SK-N-SH (cell line): ENCODE measurements at regions of chr7 and their contacts with region 1.

Region 1: GRCh38 chr7:18570890-18571478 is 75.4 kb downstream of the HDAC9 start:
- DNase-seq: peak; percentile 65
- H3K4me3 ChIP-seq: no peak overlapping the region
- H3K27ac ChIP-seq: peak overlapping the region in 1 of 2 experiments; percentile 53; a peak in 1 of 4 replicates
- H3K4me1 ChIP-seq: peaks cover 10 to 13% of the 10 kb centered on the region in 2 experiments; a peak in 3 of 4 replicates
- H3K27me3 ChIP-seq: no peaks in the 10 kb centered on the region
- CTCF ChIP-seq: peak; percentile 93
- EP300 ChIP-seq: no peak
- RAD21 ChIP-seq: peak; percentile 95

Region 2: GRCh38 chr7:18361756-18362155 is 209.2 kb before region 1 on chr7:
- CTCF ChIA-PET with region 1: interaction called, 69 read pairs
- POLR2A ChIA-PET with region 1: no interaction called
- DNase-seq: no peak
- H3K4me3 ChIP-seq: no peak overlapping the region
- H3K27ac ChIP-seq: no peak overlapping the region
- H3K4me1 ChIP-seq: no peaks in the 10 kb centered on the region; a peak in 2 of 4 replicates
- H3K27me3 ChIP-seq: no peaks in the 10 kb centered on the region
- CTCF ChIP-seq: no peak
- EP300 ChIP-seq: no peak
- RAD21 ChIP-seq: no peak

Region 3: DNA sequence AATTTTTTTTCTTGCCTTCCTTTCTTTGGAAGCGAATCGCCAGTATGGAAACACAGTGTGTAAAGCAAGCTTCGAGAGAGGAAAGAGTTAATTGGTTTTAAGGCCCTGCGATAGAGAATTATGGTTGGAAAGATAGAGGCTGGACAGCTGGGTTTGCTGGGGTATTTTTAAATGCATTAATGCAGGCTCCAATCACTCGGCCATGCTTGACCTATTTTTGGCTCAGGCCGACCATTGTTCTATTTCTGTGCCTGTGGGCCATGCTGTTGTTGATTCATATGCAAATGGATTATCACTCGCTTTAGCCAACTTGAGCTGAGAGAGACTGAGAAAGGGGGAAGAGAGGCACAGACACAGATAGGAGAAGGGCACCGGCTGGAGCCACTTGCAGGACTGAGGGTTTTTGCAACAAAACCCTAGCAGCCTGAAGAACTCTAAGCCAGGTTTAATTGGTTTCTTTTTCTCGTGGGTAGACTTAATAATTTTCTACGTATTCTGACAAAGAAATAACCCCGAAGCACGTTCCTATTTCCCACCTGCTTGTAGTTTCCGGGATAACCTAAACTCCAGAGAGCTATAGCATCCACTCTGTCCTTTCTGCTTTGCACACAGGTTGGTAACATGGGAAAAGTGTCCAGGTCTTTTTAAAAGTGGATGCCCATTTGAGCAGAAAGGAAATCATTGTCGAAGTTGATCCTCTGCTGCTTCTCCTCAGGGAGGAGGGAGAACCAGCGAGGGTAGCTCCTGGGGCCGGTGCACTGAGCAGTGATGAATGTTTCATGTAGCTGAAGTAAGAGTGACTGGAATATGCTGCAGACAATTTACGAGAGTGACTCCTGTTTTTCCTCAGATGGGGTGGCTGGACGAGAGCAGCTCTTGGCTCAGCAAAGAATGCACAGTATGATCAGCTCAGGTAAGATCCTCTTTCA is 75.3 kb before region 1 on chr7 and contains the start of gene HDAC9:
- CTCF ChIA-PET with region 1: interaction called, 38 read pairs
- POLR2A ChIA-PET with region 1: interaction called, 8 read pairs
- DNase-seq: peak; percentile 49
- H3K4me3 ChIP-seq: peak within 1 kb of the TSS; percentile 63 to 67
- H3K27ac ChIP-seq: peak within 1 kb of the TSS; percentile 80 to 100
- H3K4me1 ChIP-seq: peaks cover 8 to 53% of the 10 kb centered on the region in 2 experiments; a peak in 3 of 4 replicates
- H3K27me3 ChIP-seq: no peaks in the 10 kb centered on the region
- CTCF ChIP-seq: no peak
- EP300 ChIP-seq: peak; percentile 62 to 93; a peak in 2 of 4 replicates
- RAD21 ChIP-seq: peak; percentile 43
- polyA plus RNA-seq, gene HDAC9: 11.6 and 19.8 TPM in 2 replicates

Region 4: DNA sequence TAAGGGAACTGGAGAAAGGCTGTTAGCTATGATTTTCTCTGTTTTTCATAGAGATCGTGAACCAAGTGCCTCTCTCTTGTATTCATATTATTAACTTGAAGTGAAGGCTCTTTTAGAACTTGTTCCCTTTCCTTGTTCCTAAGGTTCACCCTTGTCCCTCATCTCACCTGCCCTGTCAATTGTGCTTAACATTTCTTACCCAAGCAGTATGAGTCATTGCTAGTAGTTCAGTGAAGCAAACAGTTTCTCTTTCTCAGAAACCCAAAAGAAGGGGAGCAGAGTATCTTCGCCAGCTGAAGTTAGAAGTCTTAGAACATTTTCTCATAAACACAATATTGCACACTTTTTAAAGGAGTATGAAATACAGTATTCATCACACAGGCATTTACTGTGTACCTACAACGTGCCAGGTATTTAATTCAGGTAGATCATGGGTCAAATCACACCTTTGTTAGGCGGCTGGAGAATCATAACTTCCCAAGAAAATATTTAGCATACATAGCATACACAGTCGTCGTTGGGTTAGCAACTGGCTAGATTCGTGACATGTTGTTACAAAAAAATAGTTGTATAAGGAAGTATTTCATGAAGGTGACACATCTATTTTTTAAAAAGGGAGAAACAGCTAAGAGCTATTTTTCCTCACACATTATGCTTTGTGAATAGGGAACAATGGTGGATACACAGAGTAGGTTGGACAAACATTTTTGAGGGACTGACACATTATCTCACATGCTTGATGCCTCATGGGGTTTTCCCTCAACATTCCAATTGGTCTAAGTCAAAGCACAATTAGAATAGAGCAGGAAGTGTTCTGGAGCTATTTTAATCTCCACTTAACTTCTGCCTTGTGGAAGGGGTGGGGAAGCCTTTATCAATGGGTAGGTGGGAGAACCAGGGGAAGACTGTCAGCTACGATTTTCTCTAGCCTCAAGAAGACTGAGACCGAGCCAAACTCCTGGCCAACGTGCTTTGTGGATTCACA is 62.2 kb before region 1 on chr7:
- CTCF ChIA-PET with region 1: interaction called, 13 read pairs
- POLR2A ChIA-PET with region 1: no interaction called
- DNase-seq: no peak
- H3K4me3 ChIP-seq: peak overlapping the region; percentile 49 to 69; a peak in 3 of 4 replicates
- H3K27ac ChIP-seq: peak overlapping the region; percentile 87 to 99
- H3K4me1 ChIP-seq: peaks cover 13 to 26% of the 10 kb centered on the region in 2 experiments
- H3K27me3 ChIP-seq: no peaks in the 10 kb centered on the region
- CTCF ChIP-seq: no peak
- EP300 ChIP-seq: peak; percentile 6 to 94; a peak in 3 of 4 replicates
- RAD21 ChIP-seq: no peak

Region 5: DNA sequence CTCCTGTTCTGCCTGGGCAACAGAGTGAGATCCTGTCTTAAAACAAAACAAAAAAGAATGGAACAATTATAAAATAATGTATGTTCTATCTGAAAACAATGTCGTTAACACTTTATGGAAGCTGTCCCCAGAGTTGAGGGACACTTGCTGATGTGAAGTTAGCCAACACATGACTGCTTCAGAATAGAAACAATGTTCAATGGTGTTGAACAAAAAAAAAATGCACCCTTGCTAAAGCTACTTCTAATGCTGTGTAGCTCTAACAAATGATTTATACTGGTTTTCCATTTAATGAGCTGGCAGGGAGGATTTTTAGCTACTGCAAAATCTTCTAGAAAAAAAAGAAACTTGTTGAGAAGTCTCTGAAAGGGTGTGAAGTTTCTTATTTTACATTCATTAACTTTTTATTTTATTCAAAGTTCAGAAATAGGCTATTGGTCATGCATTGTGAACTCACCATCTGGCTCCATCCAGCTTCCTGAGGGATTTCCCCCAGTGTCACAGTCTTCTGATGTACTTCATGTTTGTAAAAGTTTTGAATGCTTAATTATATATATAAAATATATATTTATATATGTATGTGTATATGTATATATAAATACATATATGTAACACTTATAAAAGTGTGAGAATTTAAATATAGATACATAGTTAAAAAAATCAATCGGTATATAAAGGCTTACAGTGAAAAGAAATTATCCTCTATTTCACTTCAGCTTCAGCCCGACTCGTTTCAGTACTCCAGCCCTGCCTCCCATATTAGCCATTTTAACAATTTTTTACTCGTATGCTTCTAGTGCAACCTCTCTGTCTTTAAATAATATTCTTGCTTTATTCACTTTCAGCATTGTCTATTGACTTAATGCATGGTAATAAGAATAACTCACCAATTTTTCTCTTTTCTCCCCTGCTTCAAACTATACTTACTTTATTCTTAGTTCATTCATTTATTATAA is 40.5 kb before region 1 on chr7:
- CTCF ChIA-PET with region 1: no interaction called
- POLR2A ChIA-PET with region 1: no interaction called
- DNase-seq: no peak
- H3K4me3 ChIP-seq: no peak overlapping the region
- H3K27ac ChIP-seq: no peak overlapping the region
- H3K4me1 ChIP-seq: peaks cover 5 to 17% of the 10 kb centered on the region in 2 experiments; a peak in 3 of 4 replicates
- H3K27me3 ChIP-seq: no peaks in the 10 kb centered on the region
- CTCF ChIP-seq: no peak
- EP300 ChIP-seq: no peak
- RAD21 ChIP-seq: no peak

Region 6: GRCh38 chr7:18558503-18558902 is 12.5 kb before region 1 on chr7:
- CTCF ChIA-PET with region 1: interaction called, 36 read pairs
- POLR2A ChIA-PET with region 1: no interaction called
- DNase-seq: no peak
- H3K4me3 ChIP-seq: no peak overlapping the region
- H3K27ac ChIP-seq: peak overlapping the region in 1 of 2 experiments; percentile 7; a peak in 1 of 4 replicates
- H3K4me1 ChIP-seq: peaks cover 17 to 51% of the 10 kb centered on the region in 2 experiments; a peak in 3 of 4 replicates
- H3K27me3 ChIP-seq: no peaks in the 10 kb centered on the region
- CTCF ChIP-seq: no peak
- EP300 ChIP-seq: no peak
- RAD21 ChIP-seq: no peak

Region 7: GRCh38 chr7:18583305-18583704 is 12.3 kb after region 1 on chr7:
- CTCF ChIA-PET with region 1: interaction called, 73 read pairs
- POLR2A ChIA-PET with region 1: no interaction called
- DNase-seq: no peak
- H3K4me3 ChIP-seq: no peak overlapping the region
- H3K27ac ChIP-seq: 0 out of 4 replicates have a peak overlapping the region, but pooled peaks of 1 of the 2 experiments have one; percentile 6
- H3K4me1 ChIP-seq: peaks cover 9 to 16% of the 10 kb centered on the region in 2 experiments; a peak in 3 of 4 replicates
- H3K27me3 ChIP-seq: no peaks in the 10 kb centered on the region
- CTCF ChIP-seq: no peak
- EP300 ChIP-seq: no peak
- RAD21 ChIP-seq: no peak

Region 8: DNA sequence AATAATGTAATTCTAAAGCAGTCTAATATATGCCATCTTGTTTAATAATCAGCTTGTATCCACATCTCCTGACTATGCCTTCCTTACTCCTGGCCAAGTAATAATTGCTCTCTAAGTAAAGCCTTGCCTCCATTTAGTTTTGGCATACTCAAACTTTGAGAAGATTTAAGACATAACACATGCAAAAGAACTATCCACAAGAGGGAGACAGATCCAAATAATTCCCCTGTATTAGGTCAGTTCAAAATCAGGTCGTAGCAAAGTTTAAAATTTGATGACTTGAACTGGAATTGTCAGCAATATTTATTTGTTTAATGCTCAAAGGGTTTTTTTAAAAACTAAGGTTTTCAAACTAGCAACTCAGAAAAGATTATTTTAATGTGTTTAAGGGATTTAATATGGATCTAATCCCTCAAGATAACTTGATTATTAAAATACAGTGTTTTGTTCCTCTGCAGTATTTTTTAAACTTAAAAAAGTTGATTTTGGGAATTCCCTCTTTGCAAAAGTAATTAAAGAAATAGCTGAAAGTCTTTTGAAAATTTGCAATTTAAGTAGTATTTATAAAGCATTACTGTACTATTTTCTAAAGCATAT is 19.9 kb after region 1 on chr7:
- CTCF ChIA-PET with region 1: interaction called, 73 read pairs
- POLR2A ChIA-PET with region 1: no interaction called
- DNase-seq: peak; percentile 62
- H3K4me3 ChIP-seq: no peak overlapping the region
- H3K27ac ChIP-seq: peak overlapping the region in 1 of 2 experiments; percentile 50; a peak in 3 of 4 replicates
- H3K4me1 ChIP-seq: peaks cover 0 to 2% of the 10 kb centered on the region in 2 experiments; a peak in 1 of 4 replicates
- H3K27me3 ChIP-seq: no peaks in the 10 kb centered on the region
- CTCF ChIP-seq: peak; percentile 96
- EP300 ChIP-seq: no peak
- RAD21 ChIP-seq: peak; percentile 96